ENCODE measurements at regions of chr16 and their contacts with region 1.

Region 1: GRCh38 chr16:28317040-28317880 is 24.9 kb downstream of the SBK1 start:
- DNase-seq: peak; percentile 91
- ATAC-seq: peak; percentile 91
- H3K4me3 Mint-ChIP-seq: no peak overlapping the region
- H3K27ac Mint-ChIP-seq: peak overlapping the region; percentile 72
- H3K4me1 Mint-ChIP-seq: peaks cover 39% of the 10 kb centered on the region
- H3K27me3 Mint-ChIP-seq: no peaks in the 10 kb centered on the region
- CTCF ChIP-seq: peak; percentile 88

Region 2: DNA sequence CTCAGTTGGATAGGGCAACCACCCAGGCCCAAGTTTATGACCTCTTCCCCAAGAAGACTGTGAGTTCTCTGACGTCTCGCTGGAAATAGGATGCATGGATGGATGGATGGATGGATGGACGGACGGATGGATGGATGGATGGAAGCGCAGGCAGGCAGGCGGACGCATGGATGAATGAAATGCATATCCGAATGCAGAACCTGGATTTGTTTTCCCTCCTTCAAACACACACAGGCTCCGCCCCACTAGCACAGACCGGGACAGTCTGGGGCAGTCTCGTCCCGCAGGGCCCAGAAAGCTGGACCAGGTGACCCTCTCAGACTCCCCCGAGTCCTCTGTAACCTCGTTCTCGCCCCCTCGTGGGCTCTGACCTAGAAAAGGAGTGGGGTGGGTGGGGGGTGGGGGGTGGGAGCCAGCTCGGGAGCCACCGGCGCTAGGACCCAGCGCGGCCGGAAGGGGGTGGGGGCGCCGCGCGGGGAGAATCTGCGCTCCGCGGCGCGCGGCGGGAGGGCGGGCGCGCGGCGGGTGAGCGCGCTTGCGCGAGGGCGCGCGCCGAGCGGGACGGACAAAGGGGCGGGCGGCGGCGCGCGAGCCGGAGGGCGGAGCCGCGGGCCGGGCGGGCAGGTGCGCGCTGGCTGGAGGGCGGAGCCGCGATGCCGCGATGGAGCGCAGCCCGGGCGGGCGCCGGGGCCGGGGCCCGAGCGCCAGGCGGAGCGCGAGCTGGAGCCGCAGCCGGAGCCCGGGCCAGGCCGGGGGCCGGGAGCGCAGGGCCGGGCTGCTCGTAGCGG is 25.2 kb before region 1 on chr16 and contains the start of gene SBK1:
- CTCF ChIA-PET with region 1: interaction called, 259 read pairs
- POLR2A ChIA-PET with region 1: interaction called, 7 read pairs
- intact Hi-C with region 1: no loop called
- DNase-seq: peak; percentile 80
- ATAC-seq: peak; percentile 92
- H3K4me3 Mint-ChIP-seq: peak within 1 kb of the TSS; percentile 87
- H3K27ac Mint-ChIP-seq: peak within 1 kb of the TSS; percentile 78
- H3K4me1 Mint-ChIP-seq: peaks cover 54% of the 10 kb centered on the region
- H3K27me3 Mint-ChIP-seq: no peaks in the 10 kb centered on the region
- CTCF ChIP-seq: no peak
- total RNA-seq, gene SBK1: 35.3 to 35.9 TPM